Heart right ventricle (tissue), 16 donors: ENCODE measurements at regions of chr19 and their contacts with region 1.

Region 1: GRCh38 chr19:43463381-43464136 is 1.8 kb downstream of the LYPD3 start:
- DNase-seq: peak; percentile 97 to 99
- ATAC-seq: peak; percentile 94 to 97 (median 95)
- H3K4me3 ChIP-seq: peak overlapping the region; percentile 23 to 82 (median 64)
- H3K27ac ChIP-seq: peak overlapping the region; percentile 5 to 88 (median 78)
- H3K4me1 ChIP-seq: peaks cover 0 to 38% (median 13%) of the 10 kb centered on the region in 9 donors
- H3K27me3 ChIP-seq: peaks cover 0 to 14% (median 6%) of the 10 kb centered on the region in 7 donors
- CTCF ChIP-seq: no peak

Region 2: GRCh38 chr19:43416951-43417623 is 46.5 kb before region 1 on chr19:
- intact Hi-C with region 1: no loop called
- DNase-seq: no peak
- ATAC-seq: no peak
- H3K4me3 ChIP-seq: no peak overlapping the region
- H3K27ac ChIP-seq: no peak overlapping the region
- H3K4me1 ChIP-seq: no peaks in the 10 kb centered on the region
- H3K27me3 ChIP-seq: peaks cover 0 to 4% (median 0%) of the 10 kb centered on the region in 7 donors
- CTCF ChIP-seq: no peak

Region 3: GRCh38 chr19:43503501-43504425 is 40.2 kb after region 1 on chr19:
- intact Hi-C with region 1: loop called in 5 of 10 experiments (anchors 5 kb)
- DNase-seq: peak; percentile 98
- ATAC-seq: peak; percentile 98 to 99 (median 99)
- H3K4me3 ChIP-seq: peak overlapping the region; percentile 61 to 89 (median 80)
- H3K27ac ChIP-seq: peak overlapping the region; percentile 55 to 92 (median 86)
- H3K4me1 ChIP-seq: peaks cover 0 to 43% (median 20%) of the 10 kb centered on the region in 9 donors
- H3K27me3 ChIP-seq: no peaks in the 10 kb centered on the region
- CTCF ChIP-seq: peak in 4 of 9 donors; percentile 29 to 52 (median 42)

Region 4: GRCh38 chr19:43519436-43520088 is 56.0 kb after region 1 on chr19:
- intact Hi-C with region 1: loop called in 1 of 10 experiments (anchors 5 kb)
- DNase-seq: peak; percentile 69 to 78
- ATAC-seq: peak in 6 of 8 donors; percentile 60 to 79 (median 70)
- H3K4me3 ChIP-seq: no peak overlapping the region
- H3K27ac ChIP-seq: no peak overlapping the region
- H3K4me1 ChIP-seq: peaks cover 0 to 12% (median 2%) of the 10 kb centered on the region in 9 donors
- H3K27me3 ChIP-seq: no peaks in the 10 kb centered on the region
- CTCF ChIP-seq: peak; percentile 78 to 95 (median 90)

Region 5: GRCh38 chr19:44792281-44792680 is 1328.7 kb after region 1 on chr19:
- intact Hi-C with region 1: no loop called
- DNase-seq: no peak
- ATAC-seq: no peak
- H3K4me3 ChIP-seq: no peak overlapping the region
- H3K27ac ChIP-seq: no peak overlapping the region
- H3K4me1 ChIP-seq: peaks cover 0 to 19% (median 14%) of the 10 kb centered on the region in 9 donors
- H3K27me3 ChIP-seq: no peaks in the 10 kb centered on the region
- CTCF ChIP-seq: no peak